ENCODE measurements at regions of chr16 and their contacts with region 1.

Region 1: DNA sequence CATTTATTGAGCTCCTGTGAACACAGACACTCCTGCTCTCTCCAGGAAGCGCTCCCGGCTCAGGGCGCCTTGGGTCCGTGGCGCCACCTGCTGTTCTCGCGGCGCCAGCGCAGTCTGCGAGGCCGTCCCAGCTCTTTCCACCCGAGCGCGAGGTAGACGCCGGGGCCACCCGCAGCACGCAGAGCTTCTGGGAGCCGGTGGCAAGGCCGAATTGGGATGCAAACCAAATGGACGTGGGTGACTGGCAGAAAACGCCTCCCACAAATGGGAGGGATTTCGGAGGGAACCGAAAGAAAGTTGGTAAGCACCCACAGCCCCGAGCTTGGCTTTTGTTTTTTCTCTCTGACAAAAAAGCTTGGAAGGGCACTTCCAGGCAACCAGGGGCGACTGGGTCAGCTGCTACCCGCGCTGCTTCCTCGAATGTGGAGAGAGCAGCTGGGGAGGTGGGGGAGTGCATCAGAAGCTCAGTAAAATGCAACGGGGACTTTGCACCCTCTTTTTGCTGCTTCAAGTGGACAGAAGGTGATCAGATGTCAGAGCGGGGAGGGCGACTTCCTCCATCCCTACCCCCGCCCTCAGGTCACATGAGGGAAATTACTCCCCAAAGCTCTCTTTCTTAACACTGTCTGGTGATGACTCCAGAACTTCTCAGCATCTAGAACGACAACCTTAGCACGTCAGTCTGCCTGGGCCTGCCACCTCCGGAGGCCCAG is 13.5 kb upstream of the N4BP1 start:
- DNase-seq: peak; percentile 80 to 87 (median 83)
- H3K4me3 ChIP-seq: peak overlapping the region in 6 of 7 experiments; percentile 53 to 87 (median 71)
- H3K27ac ChIP-seq: no peak overlapping the region
- H3K4me1 ChIP-seq: peaks cover 13 to 45% (median 43%) of the 10 kb centered on the region in 4 experiments
- H3K27me3 ChIP-seq: no peaks in the 10 kb centered on the region

Region 2: DNA sequence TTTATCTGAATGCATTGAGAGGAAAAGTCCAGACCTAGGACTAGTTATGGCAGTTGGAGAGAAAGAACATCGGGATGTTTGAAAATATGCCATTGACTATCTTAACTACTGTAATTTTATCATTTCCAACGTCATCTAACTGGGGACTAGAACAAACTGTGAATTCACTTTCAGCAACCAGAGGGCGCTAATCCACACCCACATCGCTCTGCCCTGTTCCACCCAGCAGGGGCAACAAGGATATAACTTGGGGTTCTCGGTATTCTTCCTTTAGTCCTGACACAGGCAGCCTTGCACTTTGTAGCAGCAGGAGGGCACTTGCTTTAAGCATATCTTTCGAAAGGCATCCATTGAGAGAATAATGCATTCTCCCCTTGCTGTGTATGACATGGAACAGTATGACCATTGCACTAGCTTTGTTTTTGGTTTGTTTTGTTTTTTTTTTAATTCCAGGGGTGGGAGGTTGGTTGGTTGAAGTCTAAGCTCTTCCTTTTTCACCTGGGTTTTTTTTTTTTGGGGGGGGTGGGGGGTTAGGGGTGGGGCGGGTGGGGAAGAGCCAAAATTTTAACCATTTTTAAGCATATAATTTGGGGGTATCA is 269.8 kb before region 1 on chr16:
- CTCF ChIA-PET with region 1: interaction called, 43 read pairs
- POLR2A ChIA-PET with region 1: no interaction called
- DNase-seq: peak; percentile 92 to 96 (median 96)
- H3K4me3 ChIP-seq: no peak overlapping the region
- H3K27ac ChIP-seq: no peak overlapping the region
- H3K4me1 ChIP-seq: peaks cover 0 to 14% (median 7%) of the 10 kb centered on the region in 4 experiments
- H3K27me3 ChIP-seq: no peaks in the 10 kb centered on the region

Region 3: GRCh38 chr16:48542020-48542473 is 81.4 kb before region 1 on chr16:
- CTCF ChIA-PET with region 1: interaction called, 66 read pairs
- POLR2A ChIA-PET with region 1: no interaction called
- DNase-seq: peak; percentile 75 to 88 (median 88)
- H3K4me3 ChIP-seq: peak overlapping the region in 1 of 7 experiments; percentile 59
- H3K27ac ChIP-seq: no peak overlapping the region
- H3K4me1 ChIP-seq: peaks cover 1 to 17% (median 10%) of the 10 kb centered on the region in 4 experiments
- H3K27me3 ChIP-seq: no peaks in the 10 kb centered on the region

Region 4: DNA sequence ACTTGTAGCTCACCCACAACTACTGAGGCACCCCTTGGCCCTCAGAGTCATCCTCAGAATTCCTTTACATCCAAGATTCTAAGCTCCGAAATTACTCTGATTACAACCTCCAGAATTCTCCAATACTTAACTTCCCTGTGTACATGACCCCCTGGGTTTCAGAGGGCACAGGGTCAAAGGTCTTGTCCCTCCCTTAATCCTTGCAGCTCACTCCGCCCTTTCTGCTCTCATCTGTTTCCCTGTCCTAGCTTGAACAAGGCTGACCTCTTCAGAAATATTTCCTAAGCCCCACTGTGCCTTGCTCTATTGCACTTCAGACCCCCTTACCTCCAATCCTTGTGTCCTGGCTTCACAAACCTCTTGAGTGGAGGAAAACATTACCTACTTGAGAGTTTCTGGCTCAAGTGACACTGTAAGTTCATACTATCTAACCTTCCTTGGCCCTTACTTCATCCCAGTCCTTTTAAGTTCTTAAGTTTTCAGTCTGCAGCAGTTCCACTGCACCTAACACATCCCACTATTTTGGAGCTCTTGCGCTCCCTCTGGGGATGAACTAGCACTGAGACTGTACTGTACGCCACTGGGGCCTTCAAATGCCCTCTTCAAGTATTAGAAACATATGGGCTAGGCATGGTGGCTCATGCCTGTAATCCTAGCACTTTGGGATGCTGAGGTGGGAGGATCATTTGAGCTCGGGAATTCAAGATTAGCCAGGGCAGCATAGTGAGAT is 19.6 kb before region 1 on chr16:
- CTCF ChIA-PET with region 1: interaction called, 10 read pairs
- POLR2A ChIA-PET with region 1: no interaction called
- DNase-seq: no peak
- H3K4me3 ChIP-seq: no peak overlapping the region
- H3K27ac ChIP-seq: no peak overlapping the region
- H3K4me1 ChIP-seq: peaks cover 7 to 35% (median 21%) of the 10 kb centered on the region in 4 experiments
- H3K27me3 ChIP-seq: no peaks in the 10 kb centered on the region

Region 5: GRCh38 chr16:48609652-48610029 is 13.8 kb before region 1 on chr16:
- CTCF ChIA-PET with region 1: interaction called, 36 read pairs
- POLR2A ChIA-PET with region 1: interaction called, 3 read pairs
- DNase-seq: no peak
- H3K4me3 ChIP-seq: peak overlapping the region; percentile 76 to 94 (median 88)
- H3K27ac ChIP-seq: peak overlapping the region; percentile 46 to 95
- H3K4me1 ChIP-seq: peaks cover 32 to 67% (median 58%) of the 10 kb centered on the region in 4 experiments
- H3K27me3 ChIP-seq: no peaks in the 10 kb centered on the region